ENCODE measurements at regions of chr1 and their contacts with region 1.

Region 1: GRCh38 chr1:11072216-11072917 is 12.5 kb upstream of the SRM start:
- DNase-seq: peak in 1 of 2 donors; percentile 8
- ATAC-seq: peak in 3 of 4 donors; percentile 54 to 61 (median 56)
- H3K4me3 ChIP-seq: no peak overlapping the region
- H3K27ac ChIP-seq: no peak overlapping the region
- H3K4me1 ChIP-seq: no peaks in the 10 kb centered on the region
- H3K27me3 ChIP-seq: no peaks in the 10 kb centered on the region
- CTCF ChIP-seq: peak; percentile 16

Region 2: DNA sequence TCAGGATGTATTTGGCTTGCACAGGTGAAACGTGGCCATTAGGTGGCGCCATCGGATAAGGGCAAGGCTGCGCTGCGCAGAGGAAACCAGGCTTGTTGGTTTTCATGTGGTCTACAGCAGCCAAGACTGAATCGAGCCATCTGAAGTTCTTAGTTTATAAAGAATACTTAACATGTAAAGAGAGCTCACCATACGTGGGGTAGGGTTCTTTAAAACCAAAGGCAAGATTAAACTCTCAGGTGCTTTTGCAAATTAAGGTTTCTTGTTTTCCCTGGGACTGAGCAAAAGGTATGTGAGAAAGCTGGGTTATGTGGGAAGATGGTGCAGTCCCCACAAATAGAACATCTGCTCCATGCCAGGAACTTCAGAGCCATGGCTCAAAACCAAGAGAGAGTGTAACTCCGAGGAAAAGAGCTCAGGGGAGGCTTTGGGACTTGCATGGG is 34.6 kb before region 1 on chr1:
- intact Hi-C with region 1: loop called in 1 of 2 experiments (anchors 5 kb)
- DNase-seq: peak; percentile 86 to 93
- ATAC-seq: peak; percentile 93 to 97 (median 95)
- H3K4me3 ChIP-seq: peak overlapping the region; percentile 40
- H3K27ac ChIP-seq: peak overlapping the region; percentile 61
- H3K4me1 ChIP-seq: peaks cover 8% of the 10 kb centered on the region
- H3K27me3 ChIP-seq: peaks cover 0 to 2% (median 0%) of the 10 kb centered on the region in 3 donors
- CTCF ChIP-seq: peak; percentile 98

Region 3: DNA sequence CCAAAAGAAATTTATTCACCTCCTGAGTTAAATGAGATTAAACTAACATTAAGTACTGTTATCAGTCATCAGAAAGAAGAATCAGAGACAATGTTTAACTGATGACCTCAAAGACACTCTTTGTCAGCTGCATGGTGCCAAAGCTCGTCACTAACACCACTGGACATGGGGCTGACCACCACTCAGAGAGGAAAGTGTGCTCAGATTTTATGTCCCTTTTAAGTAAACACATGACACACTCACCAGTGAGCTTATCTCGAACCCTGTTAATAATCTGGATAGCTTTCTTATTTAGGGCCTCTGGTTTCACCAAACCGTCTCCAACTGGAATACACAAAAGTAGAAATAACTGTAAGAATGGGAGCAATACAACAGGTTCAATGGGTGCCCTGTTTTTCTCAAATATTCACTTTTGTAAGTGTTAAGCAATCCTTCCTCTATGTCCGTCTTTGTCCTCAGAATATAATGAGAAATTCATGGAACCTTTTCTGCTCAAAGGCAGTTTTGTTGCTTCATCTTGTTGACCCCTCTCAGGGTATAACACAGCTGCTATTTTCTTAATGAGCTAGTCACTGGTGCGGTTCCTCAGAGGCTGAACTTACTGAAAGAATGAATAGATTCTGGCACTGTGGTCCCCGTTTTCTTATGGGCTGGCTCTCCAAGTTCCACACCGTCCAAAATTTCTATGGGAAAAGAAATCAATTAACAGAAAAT is 36.8 kb after region 1 on chr1:
- intact Hi-C with region 1: loop called in 1 of 2 experiments (anchors 5 kb)
- DNase-seq: no peak
- ATAC-seq: no peak
- H3K4me3 ChIP-seq: no peak overlapping the region
- H3K27ac ChIP-seq: no peak overlapping the region
- H3K4me1 ChIP-seq: no peaks in the 10 kb centered on the region
- H3K27me3 ChIP-seq: no peaks in the 10 kb centered on the region
- CTCF ChIP-seq: no peak

Measured in psoas muscle (tissue), 8 donors.